Activated naive CD4-positive, alpha-beta T cell treated with anti-CD3 and anti-CD28 coated beads for 36 hours (primary cell): ENCODE measurements at regions of chr7 and their contacts with region 1.

Region 1: GRCh38 chr7:84446991-84447480 is 252.4 kb upstream of the SEMA3A start:
- DNase-seq: no peak
- H3K4me3 Mint-ChIP-seq: no peak overlapping the region
- H3K27ac Mint-ChIP-seq: no peak overlapping the region
- H3K4me1 Mint-ChIP-seq: peaks cover 6% of the 10 kb centered on the region
- H3K27me3 Mint-ChIP-seq: peaks cover 3% of the 10 kb centered on the region

Region 2: DNA sequence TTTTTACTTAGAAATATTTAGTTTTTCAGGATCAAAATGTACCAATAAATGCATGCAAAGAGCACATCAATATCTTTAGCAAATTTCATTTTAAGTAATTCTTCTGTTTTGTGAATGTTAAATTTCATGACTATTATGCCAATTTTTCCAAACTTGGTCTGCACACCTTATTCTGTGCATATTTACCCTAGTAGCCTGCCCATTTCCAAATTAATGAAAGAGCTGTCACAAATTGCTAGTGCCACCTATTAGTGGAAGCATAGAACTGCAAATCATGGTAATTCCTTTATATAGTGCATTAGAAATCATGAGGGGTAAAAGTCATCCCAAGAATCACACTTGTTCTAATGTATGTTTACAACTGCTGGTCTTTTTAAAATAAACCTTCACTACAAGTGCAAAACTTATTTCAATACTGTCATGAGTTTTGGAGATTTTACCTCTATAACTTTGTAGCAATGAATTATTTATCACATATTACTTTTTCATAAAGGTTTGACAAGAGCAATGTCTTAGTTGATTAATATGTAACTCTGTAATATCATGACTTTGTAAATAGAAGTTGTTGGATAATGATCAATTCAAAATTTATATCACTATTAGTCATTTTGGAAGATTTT is 258.1 kb before region 1 on chr7:
- CTCF ChIA-PET with region 1: no interaction called
- intact Hi-C with region 1: loop called (anchors 2 kb)
- DNase-seq: no peak
- H3K4me3 Mint-ChIP-seq: no peak overlapping the region
- H3K27ac Mint-ChIP-seq: no peak overlapping the region
- H3K4me1 Mint-ChIP-seq: peaks cover 36% of the 10 kb centered on the region
- H3K27me3 Mint-ChIP-seq: no peaks in the 10 kb centered on the region